Right ventricle myocardium inferior (tissue), 1 donor: ENCODE measurements at regions of chr21 and their contacts with region 1.

Region 1: GRCh38 chr21:36769051-36769839 is 70.3 kb downstream of the SIM2 start:
- DNase-seq: no peak
- ATAC-seq: no peak

Region 2: GRCh38 chr21:36354918-36355680 is 414.1 kb before region 1 on chr21:
- intact Hi-C with region 1: no loop called
- DNase-seq: no peak
- ATAC-seq: no peak

Region 3: GRCh38 chr21:36753556-36753955 is 15.7 kb before region 1 on chr21:
- intact Hi-C with region 1: loop called (anchors 2 kb)
- DNase-seq: no peak
- ATAC-seq: no peak